ENCODE measurements at regions of chr9 and their contacts with region 1.

Region 1: DNA sequence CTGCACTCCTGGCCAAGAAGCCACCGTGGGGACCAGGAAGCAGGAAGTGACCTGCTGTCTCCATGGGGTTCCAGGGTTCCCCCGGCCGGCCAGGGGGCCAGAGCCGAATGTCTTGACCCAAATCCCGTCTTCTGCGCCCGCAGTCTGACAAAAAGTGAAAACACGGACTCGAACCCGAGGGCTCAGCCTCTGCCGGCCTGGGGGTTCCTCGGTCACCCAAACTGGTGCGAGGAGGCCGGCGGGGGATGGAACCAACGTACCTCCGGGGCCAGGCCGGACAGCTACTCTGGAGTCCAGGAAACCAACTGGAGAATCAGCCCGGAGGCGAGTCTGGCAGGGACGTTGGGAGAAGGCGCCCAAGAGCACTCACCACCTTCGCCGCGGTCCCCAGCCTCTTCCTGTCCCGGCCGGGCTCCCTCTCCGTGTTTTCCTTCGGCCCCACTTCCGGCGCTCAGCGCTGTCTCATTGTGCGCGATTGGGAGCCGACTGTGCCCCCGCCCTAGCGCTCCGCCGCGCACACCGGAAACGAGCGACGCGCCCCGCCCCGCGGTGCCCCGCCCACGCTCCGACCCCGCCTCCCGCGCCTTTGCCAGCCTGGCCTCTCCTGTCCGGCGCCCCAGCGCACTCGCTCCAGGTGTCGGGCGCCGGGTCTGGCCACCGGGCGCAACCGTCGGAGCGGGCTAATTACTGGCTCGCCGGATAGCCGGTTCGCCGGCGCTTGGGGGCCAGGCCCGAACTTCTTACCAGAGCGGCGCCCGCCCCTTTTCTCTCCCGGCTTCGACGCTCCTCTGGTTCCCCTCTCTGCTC is at the start of gene TUT7:
- DNase-seq: peak; percentile 99
- H3K4me3 Mint-ChIP-seq: peak within 1 kb of the TSS; percentile 99
- H3K27ac Mint-ChIP-seq: peak within 1 kb of the TSS; percentile 96
- H3K4me1 Mint-ChIP-seq: peaks cover 26% of the 10 kb centered on the region
- H3K27me3 Mint-ChIP-seq: peaks cover 8% of the 10 kb centered on the region
- total RNA-seq, gene TUT7: 38.9 and 39.7 TPM in 2 replicates

Region 2: DNA sequence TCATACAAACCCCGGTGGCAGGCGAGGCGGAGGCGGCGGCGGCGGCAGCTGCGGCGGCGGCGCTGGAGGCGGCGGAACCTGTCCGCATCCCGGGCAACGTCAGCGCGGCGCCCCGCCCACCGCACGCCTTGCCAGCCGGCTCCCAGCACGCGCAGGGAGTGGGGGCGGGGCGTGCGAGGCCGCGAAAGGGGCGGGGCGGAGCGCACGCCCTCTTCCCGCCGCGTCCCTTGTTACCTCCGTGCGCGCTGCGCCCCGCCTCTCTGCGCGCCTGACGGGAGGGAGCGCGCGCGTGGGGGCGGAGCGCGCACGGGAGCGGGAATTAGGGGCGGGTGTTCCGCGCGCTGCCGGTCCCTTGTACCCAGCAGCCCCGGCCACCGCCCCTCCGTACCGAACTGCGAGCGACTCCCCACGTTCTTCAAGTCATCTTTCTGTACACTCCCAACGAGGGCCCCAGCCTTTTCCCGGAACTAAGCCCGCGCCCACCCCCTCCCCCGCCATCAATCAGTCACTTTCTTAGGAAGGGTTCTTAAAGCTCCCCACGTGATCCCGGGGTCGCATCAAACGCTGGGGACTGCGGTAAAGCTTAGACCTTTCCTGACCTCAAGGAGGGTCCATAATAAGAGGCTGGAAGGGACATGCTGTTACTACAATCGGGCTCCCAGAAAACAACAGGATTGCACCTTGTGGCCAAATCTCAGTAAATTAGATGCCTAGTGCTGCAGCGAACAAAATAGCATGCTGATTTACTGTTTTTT is 612.2 kb before region 1 on chr9 and contains the start of gene AGTPBP1:
- intact Hi-C with region 1: loop called (anchors 5 kb)
- DNase-seq: peak; percentile 99
- H3K4me3 Mint-ChIP-seq: peak within 1 kb of the TSS; percentile 88
- H3K27ac Mint-ChIP-seq: peak within 1 kb of the TSS; percentile 94
- H3K4me1 Mint-ChIP-seq: peaks cover 25% of the 10 kb centered on the region
- H3K27me3 Mint-ChIP-seq: peaks cover 8% of the 10 kb centered on the region
- total RNA-seq, gene AGTPBP1: 25.8 and 27.8 TPM in 2 replicates

Region 3: GRCh38 chr9:86098824-86099700 is 255.2 kb before region 1 on chr9 and contains the start of gene GOLM1:
- intact Hi-C with region 1: loop called (anchors 5 kb)
- DNase-seq: peak; percentile 84
- H3K4me3 Mint-ChIP-seq: peak within 1 kb of the TSS; percentile 91
- H3K27ac Mint-ChIP-seq: peak within 1 kb of the TSS; percentile 88
- H3K4me1 Mint-ChIP-seq: peaks cover 5% of the 10 kb centered on the region
- H3K27me3 Mint-ChIP-seq: peaks cover 60% of the 10 kb centered on the region
- total RNA-seq, gene GOLM1: 5.5 and 6.6 TPM in 2 replicates

Region 4: GRCh38 chr9:86303316-86303975 is 50.8 kb before region 1 on chr9:
- intact Hi-C with region 1: loop called (anchors 1 kb)
- DNase-seq: peak; percentile 84
- H3K4me3 Mint-ChIP-seq: peak overlapping the region; percentile 73
- H3K27ac Mint-ChIP-seq: peak overlapping the region; percentile 90
- H3K4me1 Mint-ChIP-seq: peaks cover 28% of the 10 kb centered on the region
- H3K27me3 Mint-ChIP-seq: no peaks in the 10 kb centered on the region

Region 5: GRCh38 chr9:86405926-86406325 is 51.7 kb after region 1 on chr9:
- intact Hi-C with region 1: loop called (anchors 2 kb)
- DNase-seq: no peak
- H3K4me3 Mint-ChIP-seq: peak overlapping the region; percentile 36
- H3K27ac Mint-ChIP-seq: peak overlapping the region; percentile 18
- H3K4me1 Mint-ChIP-seq: peaks cover 9% of the 10 kb centered on the region
- H3K27me3 Mint-ChIP-seq: peaks cover 7% of the 10 kb centered on the region

Measured in activated CD4-positive, alpha-beta T cell treated with anti-CD3 and anti-CD28 coated beads, Interleukin-2, amount 10 ng/mL, durations not matched to agents 24 days and 14 days (primary cell).